PC-3 (cell line): ENCODE measurements at regions of chr4 and their contacts with region 1.

Region 1: DNA sequence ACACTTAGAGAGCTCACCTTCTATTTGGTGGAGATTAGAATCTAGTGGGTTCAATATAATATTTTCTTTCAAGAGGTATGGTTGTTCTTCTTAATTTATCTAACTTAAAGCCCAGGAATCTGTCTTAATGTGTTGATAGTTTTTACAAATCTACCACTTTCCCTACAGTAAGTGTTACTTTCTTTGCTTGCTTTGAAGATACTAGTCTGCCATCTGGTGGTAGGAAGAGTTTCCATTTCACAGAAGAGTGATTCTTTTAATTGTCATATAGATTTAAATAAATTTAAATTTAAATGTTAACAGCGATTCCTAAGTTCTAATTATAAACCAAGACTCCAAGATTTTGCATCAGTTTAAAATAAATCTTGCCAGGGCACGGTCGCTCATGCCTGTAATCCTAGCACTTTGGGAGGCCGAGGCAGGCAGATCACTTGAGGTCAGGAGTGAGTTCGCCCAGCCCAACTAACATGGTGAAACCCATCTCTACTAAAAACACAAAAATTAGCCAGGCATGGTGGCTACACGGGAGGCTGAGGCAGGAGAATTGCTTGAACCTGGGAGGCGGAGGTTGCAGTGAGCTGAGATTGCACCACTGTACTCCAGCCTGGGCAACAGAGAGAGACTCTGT is 43.5 kb downstream of the NUDT9 start:
- DNase-seq: peak; percentile 64
- ATAC-seq: 0 out of 2 replicates have a peak, but pooled peaks have one; percentile 38
- H3K4me3 ChIP-seq: no peak overlapping the region
- H3K27ac ChIP-seq: no peak overlapping the region
- H3K4me1 ChIP-seq: 0 out of 2 replicates have a peak, but pooled peaks cover 3% of the 10 kb centered on the region
- H3K27me3 ChIP-seq: no peaks in the 10 kb centered on the region
- CTCF ChIP-seq: peak; percentile 65

Region 2: DNA sequence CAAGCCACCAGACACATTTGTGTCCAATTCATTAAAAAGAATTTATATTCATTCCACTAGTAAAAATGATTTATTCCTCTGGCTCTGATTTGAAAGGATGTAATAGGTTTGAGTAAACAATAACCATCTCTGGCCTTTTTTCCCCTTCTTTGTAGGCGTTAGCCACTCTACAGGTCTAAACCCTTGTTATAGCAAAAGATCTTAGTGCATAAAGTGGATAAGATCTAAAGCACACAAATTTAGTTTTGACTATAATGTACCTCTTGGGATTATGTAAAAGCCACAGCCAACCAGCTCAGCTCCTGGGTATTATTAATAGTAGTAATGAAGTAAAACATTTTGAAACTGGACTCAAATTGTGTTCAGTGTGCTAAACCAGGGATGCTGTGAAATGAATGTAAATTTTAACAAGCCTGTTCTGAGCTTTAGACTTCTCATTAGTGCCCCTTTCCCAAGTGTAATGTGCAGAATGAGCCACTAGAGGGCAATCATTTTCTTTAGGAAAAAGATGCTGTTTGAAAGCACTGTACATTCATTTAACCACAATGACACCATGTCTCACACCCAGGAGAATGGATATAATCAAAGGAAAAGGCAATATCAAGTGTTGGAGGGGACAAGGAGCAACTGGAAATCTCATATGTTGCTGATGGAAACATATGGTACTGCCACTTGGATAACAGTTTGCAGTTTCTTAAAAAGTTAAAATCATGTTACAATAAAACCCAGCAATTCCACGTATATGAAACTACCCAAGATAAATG is 315.2 kb before region 1 on chr4:
- CTCF ChIA-PET with region 1: interaction called, 4 read pairs
- POLR2A ChIA-PET with region 1: no interaction called
- intact Hi-C with region 1: loop called (anchors 10 kb)
- DNase-seq: peak; percentile 88
- ATAC-seq: peak; percentile 60
- H3K4me3 ChIP-seq: no peak overlapping the region
- H3K27ac ChIP-seq: no peak overlapping the region
- H3K4me1 ChIP-seq: no peaks in the 10 kb centered on the region; the same call in 1 of the 2 replicates
- H3K27me3 ChIP-seq: no peaks in the 10 kb centered on the region
- CTCF ChIP-seq: peak; percentile 88

Region 3: GRCh38 chr4:87270144-87270543 is 195.7 kb before region 1 on chr4:
- CTCF ChIA-PET with region 1: no interaction called
- POLR2A ChIA-PET with region 1: no interaction called
- intact Hi-C with region 1: loop called (anchors 1 kb)
- DNase-seq: peak; percentile 57
- ATAC-seq: peak; percentile 90
- H3K4me3 ChIP-seq: no peak overlapping the region
- H3K27ac ChIP-seq: no peak overlapping the region
- H3K4me1 ChIP-seq: no peaks in the 10 kb centered on the region
- H3K27me3 ChIP-seq: no peaks in the 10 kb centered on the region
- CTCF ChIP-seq: peak; percentile 69

Region 4: GRCh38 chr4:87353592-87353991 is 112.3 kb before region 1 on chr4:
- CTCF ChIA-PET with region 1: no interaction called
- POLR2A ChIA-PET with region 1: no interaction called
- intact Hi-C with region 1: loop called (anchors 5 kb)
- DNase-seq: peak; percentile 67
- ATAC-seq: peak; percentile 61
- H3K4me3 ChIP-seq: no peak overlapping the region
- H3K27ac ChIP-seq: no peak overlapping the region
- H3K4me1 ChIP-seq: peaks cover 20% of the 10 kb centered on the region
- H3K27me3 ChIP-seq: no peaks in the 10 kb centered on the region
- CTCF ChIP-seq: peak; percentile 76

Region 5: DNA sequence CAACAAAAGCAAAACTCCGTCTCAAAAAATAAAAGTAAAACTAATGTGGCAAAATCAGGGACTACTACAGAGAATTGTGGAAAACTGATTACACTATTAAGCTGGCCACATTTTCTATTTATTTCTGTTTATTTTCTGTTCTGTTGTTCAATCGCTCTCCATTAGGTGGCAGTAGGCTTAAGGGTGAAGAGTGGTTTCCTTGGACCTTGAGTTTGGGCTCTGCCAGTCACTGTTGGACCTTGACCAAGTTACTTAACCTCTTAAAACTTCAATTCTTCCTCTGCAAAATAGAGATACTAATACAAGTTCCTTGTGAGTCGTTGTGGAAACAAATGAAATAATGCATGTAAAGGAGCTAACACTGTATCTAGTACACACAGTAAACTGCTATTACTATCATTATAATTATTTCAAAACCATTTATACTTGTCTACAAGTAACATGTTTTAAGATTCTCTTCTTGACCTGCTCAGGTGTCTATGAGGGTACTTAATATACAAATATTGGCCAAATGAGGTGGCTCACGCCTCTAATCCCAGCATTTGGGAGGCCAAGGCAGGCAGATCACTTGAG is 90.0 kb before region 1 on chr4:
- CTCF ChIA-PET with region 1: interaction called, 3 read pairs
- POLR2A ChIA-PET with region 1: no interaction called
- intact Hi-C with region 1: loop called (anchors 1 kb)
- DNase-seq: peak; percentile 62
- ATAC-seq: peak; percentile 48
- H3K4me3 ChIP-seq: no peak overlapping the region
- H3K27ac ChIP-seq: no peak overlapping the region
- H3K4me1 ChIP-seq: no peaks in the 10 kb centered on the region
- H3K27me3 ChIP-seq: no peaks in the 10 kb centered on the region
- CTCF ChIP-seq: peak; percentile 70

Region 6: DNA sequence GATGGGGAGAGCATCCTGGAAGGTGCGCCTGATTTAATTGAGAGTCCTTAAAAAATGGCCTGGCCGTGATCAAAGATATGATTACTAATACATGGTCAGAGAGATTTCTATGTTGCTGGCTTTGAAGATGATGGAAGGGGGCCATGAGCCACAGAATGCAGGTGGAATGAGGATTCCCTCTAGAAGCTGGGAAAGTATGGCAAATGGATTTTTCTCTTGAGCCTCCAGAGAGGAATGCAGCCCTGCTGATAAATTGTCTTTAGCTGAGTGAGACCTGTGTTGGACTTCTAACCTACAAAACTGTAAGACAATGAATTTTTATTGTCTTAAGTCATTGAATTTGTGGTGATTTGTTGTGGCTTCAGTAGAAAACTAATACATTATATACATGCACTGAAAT is 35.8 kb before region 1 on chr4:
- CTCF ChIA-PET with region 1: no interaction called
- POLR2A ChIA-PET with region 1: no interaction called
- intact Hi-C with region 1: loop called (anchors 5 kb)
- DNase-seq: no peak
- ATAC-seq: no peak
- H3K4me3 ChIP-seq: no peak overlapping the region
- H3K27ac ChIP-seq: no peak overlapping the region
- H3K4me1 ChIP-seq: no peaks in the 10 kb centered on the region
- H3K27me3 ChIP-seq: no peaks in the 10 kb centered on the region
- CTCF ChIP-seq: no peak